ENCODE measurements at regions of chr12 and their contacts with region 1.

Region 1: DNA sequence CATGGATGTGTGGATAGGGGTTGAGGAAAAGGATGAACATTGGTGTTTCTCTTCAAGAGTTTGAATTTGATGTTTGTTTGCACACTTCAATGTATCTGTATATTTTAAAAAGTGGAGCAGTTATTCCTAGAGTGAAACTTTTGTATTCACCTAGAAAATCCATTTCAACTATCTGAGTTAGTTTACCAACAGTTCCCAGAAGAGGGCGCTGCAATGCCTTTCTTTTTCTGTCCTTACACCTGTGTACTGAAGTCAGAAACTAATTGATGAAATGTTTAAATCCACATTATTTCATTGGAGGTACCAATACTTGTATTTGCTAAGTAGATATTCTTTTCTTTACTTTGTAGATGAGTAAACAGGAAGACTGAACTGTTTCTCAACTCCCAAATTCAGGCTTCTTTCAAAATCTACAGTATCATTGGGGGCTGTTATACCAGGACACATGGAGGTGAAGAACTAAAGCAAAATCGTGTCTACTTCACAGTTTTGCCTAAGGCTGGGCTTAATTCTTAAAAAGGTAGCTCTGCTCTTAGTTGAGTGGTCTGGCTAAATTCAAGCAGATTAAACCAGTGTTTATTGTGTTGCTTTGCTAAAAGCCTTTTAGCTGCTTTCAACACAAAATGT is 26.6 kb upstream of the KLRB1 start:
- DNase-seq: peak in 1 of 2 donors; percentile 64
- ATAC-seq: peak in 3 of 8 donors; percentile 39 to 62 (median 59)
- H3K4me3 ChIP-seq: no peak overlapping the region
- H3K27ac ChIP-seq: no peak overlapping the region
- H3K4me1 ChIP-seq: peaks cover 0 to 35% (median 0%) of the 10 kb centered on the region in 9 donors
- H3K27me3 ChIP-seq: no peaks in the 10 kb centered on the region
- CTCF ChIP-seq: peak; percentile 44 to 82 (median 78)

Region 2: DNA sequence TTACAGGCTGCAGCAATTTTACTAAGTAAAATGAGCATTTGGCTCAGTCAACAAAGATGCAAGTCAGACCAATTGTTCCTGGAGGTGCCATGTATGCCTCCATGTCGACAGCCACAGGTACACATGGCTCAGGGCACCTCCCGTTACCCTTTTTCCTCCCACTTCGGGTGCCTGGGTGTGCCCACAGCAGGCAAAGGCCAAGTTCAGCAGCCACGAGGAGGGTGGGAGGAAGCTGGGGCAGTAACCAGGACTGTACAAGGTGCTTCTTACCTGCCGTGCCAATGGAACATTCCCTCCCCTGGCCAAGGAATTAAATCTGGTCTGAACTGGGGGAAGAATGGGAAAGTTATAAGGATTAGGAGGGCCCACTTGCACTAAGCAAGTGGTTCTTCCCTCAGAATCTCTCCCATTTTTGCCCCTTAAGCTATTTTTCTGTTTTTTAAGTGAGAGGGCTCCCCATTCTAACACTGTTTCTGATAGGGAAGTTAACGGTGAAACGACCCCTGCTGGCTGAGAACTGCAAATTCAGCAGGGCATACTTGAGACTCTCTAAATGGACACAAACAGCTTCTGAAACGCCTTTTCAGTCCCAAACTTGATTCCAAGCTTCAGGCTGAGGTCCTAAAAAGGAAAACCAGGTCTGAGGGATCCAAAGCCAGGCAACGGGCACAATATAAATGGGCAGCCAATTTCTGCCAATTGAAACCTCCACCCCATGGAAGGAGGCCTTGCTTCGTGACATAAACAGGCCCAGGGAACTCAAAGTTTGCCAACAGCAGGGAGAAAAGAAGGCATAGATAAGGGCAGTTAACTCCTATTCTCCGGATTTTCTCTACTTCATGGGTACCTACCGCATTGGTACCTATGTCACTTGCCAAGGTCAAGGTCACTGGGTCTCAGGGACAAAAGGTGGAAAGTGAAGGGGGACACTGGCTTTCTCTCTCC is 73.8 kb after region 1 on chr12:
- intact Hi-C with region 1: loop called (anchors 1 to 5 kb)
- DNase-seq: peak; percentile 24 to 50
- ATAC-seq: peak in 7 of 8 donors; percentile 50 to 83 (median 69)
- H3K4me3 ChIP-seq: no peak overlapping the region
- H3K27ac ChIP-seq: peak overlapping the region in 1 of 10 donors; percentile 81
- H3K4me1 ChIP-seq: peaks cover 0 to 30% (median 0%) of the 10 kb centered on the region in 9 donors
- H3K27me3 ChIP-seq: no peaks in the 10 kb centered on the region
- CTCF ChIP-seq: peak; percentile 58 to 83 (median 79)